B cell (primary cell): ENCODE measurements at regions of chr17 and their contacts with region 1.

Region 1: DNA sequence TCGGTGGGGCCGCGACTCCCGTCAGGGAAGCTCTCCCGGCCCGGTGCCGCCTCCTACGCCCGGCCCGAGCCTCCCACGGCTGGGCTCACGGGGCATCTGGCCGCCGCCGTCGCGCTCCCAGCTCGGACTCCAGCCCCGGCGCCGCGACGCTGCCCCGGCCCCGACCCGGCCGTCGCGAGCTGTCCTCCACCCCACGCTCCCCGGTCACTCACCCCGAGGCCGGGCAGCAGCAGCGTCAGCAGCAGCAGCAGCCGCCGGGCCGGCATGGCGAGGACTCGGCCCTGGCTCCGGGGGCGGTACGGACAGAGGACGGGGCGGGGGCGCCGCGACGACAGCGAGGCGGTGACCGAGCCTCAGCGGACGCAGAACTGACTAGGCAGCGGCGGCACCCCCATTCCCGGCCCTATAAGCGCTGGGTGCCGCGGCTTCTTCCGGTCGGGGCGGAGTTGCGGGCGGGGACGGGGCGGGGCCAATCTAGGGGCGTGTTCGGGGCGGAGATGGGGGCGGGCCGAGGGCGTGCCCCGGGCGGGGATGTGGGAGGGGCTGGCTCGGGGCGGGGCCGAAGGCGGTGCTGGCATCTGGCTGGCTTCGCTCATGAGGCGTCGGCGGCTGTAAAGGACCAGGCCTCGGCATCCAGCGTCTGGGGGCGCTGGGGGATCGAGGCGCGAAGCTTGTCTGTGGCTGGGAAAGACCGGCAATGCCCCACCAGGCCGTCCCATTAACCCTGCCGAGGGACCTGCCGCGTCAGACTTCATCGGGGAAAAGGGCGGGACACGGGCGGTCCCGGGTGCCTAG is at the start of gene ERN1:
- DNase-seq: peak; percentile 92
- ATAC-seq: peak; percentile 87
- H3K4me3 ChIP-seq: peak within 1 kb of the TSS; percentile 32 to 80 (median 66)
- H3K4me3 Mint-ChIP-seq: peak within 1 kb of the TSS; percentile 89
- H3K27ac ChIP-seq: peak within 1 kb of the TSS; percentile 72 to 76
- H3K27ac Mint-ChIP-seq: peak within 1 kb of the TSS; percentile 89
- H3K4me1 ChIP-seq: peaks cover 13 to 23% of the 10 kb centered on the region in 2 donors
- H3K4me1 Mint-ChIP-seq: peaks cover 21% of the 10 kb centered on the region
- H3K27me3 ChIP-seq: no peaks in the 10 kb centered on the region
- H3K27me3 Mint-ChIP-seq: no peaks in the 10 kb centered on the region
- CTCF ChIP-seq: no peak
- total RNA-seq, gene ERN1: 19.4 and 24.7 TPM in 2 replicates

Region 2: DNA sequence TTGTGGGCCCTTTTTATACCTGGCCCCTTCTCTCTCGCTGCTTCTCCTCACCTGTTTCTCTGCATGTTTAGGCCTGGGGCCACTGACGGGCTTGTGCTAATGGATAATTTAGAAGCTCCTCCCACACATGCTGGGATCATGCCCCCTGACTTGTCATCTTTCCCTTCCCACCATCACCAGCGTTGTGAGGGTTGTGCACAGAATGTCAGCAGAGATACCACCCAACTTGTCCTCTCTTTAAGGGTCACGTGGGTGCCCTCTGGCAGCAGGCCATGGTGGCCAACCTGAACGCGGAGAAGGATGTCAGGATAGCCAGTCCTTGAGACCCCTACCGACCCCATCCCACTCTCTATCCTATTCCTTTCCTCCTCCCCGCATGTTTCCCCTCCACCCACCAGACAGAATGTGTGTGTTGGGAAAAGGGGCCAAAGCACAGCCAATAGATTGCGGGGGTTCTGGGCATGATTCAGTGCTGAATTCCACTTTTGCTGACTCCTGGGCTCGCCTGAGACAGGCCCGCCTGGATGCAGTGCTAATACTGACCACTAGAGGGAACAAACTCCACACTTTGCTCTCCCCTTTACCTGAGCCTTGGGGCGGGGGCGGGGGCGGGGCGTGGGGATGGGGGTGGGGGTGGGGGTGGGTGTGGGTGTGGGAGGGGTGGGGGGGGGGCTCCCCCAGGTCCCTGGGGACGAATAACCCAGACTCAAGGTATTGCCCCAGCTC is 247.9 kb before region 1 on chr17 and contains the start of gene GH2:
- CTCF ChIA-PET with region 1: interaction called, 46 read pairs
- POLR2A ChIA-PET with region 1: no interaction called
- intact Hi-C with region 1: loop called (anchors 5 kb)
- DNase-seq: peak; percentile 76
- ATAC-seq: peak; percentile 91
- H3K4me3 ChIP-seq: no peak within 1 kb of the TSS
- H3K4me3 Mint-ChIP-seq: no peak within 1 kb of the TSS
- H3K27ac ChIP-seq: no peak within 1 kb of the TSS
- H3K27ac Mint-ChIP-seq: no peak within 1 kb of the TSS
- H3K4me1 ChIP-seq: no peaks in the 10 kb centered on the region
- H3K4me1 Mint-ChIP-seq: peaks cover 10% of the 10 kb centered on the region
- H3K27me3 ChIP-seq: peaks cover 0 to 3% (median 0%) of the 10 kb centered on the region in 4 experiments
- H3K27me3 Mint-ChIP-seq: peaks cover 3% of the 10 kb centered on the region
- CTCF ChIP-seq: peak; percentile 61
- total RNA-seq, gene GH2: not detected in 2 replicates

Region 3: DNA sequence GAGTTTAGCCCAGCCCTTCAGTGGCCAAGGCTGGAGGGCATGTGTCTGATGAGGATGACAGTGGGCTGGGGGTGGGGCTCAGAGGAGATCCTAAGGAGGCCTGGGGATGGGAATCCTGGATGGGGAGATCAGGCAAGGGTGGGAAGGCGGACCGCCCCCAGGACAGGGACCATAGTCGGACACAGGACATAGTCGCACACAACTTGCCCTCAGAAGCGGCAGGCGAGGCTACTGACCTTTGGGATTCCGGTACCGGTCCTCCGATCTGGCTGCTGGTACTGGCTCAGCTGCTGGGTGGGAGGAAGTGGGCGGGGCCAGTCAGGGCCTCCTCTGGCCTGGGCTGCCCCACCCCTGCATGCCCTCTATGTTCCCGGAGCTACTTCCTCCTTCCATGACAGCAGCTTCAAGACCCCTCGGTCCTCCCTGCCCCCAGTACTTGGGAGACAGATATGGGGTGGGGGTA is 198.8 kb before region 1 on chr17:
- CTCF ChIA-PET with region 1: interaction called, 16 read pairs
- POLR2A ChIA-PET with region 1: no interaction called
- intact Hi-C with region 1: no loop called
- DNase-seq: peak; percentile 77
- ATAC-seq: peak; percentile 39
- H3K4me3 ChIP-seq: peak overlapping the region; percentile 80 to 100 (median 97)
- H3K4me3 Mint-ChIP-seq: peak overlapping the region; percentile 99
- H3K27ac ChIP-seq: peak overlapping the region; percentile 83 to 85
- H3K27ac Mint-ChIP-seq: peak overlapping the region; percentile 97
- H3K4me1 ChIP-seq: peaks cover 72 to 85% of the 10 kb centered on the region in 2 donors
- H3K4me1 Mint-ChIP-seq: peaks cover 86% of the 10 kb centered on the region
- H3K27me3 ChIP-seq: no peaks in the 10 kb centered on the region
- H3K27me3 Mint-ChIP-seq: no peaks in the 10 kb centered on the region
- CTCF ChIP-seq: no peak

Region 4: GRCh38 chr17:64020056-64020766 is 109.8 kb before region 1 on chr17 and contains the start of gene ICAM2:
- CTCF ChIA-PET with region 1: interaction called, 655 read pairs
- POLR2A ChIA-PET with region 1: interaction called, 8 read pairs
- intact Hi-C with region 1: loop called (anchors 1 kb)
- DNase-seq: peak; percentile 97
- ATAC-seq: peak; percentile 83
- H3K4me3 ChIP-seq: peak within 1 kb of the TSS; percentile 70 to 87 (median 75)
- H3K4me3 Mint-ChIP-seq: peak within 1 kb of the TSS; percentile 98
- H3K27ac ChIP-seq: peak within 1 kb of the TSS; percentile 99
- H3K27ac Mint-ChIP-seq: peak within 1 kb of the TSS; percentile 99
- H3K4me1 ChIP-seq: peaks cover 59 to 66% of the 10 kb centered on the region in 2 donors
- H3K4me1 Mint-ChIP-seq: peaks cover 73% of the 10 kb centered on the region
- H3K27me3 ChIP-seq: no peaks in the 10 kb centered on the region
- H3K27me3 Mint-ChIP-seq: no peaks in the 10 kb centered on the region
- CTCF ChIP-seq: no peak
- total RNA-seq, gene ICAM2: 48.7 and 55.7 TPM in 2 replicates

Region 5: GRCh38 chr17:64073771-64074703 is 55.9 kb before region 1 on chr17:
- CTCF ChIA-PET with region 1: interaction called, 27 read pairs
- POLR2A ChIA-PET with region 1: no interaction called
- intact Hi-C with region 1: no loop called
- DNase-seq: peak; percentile 71
- ATAC-seq: peak; percentile 90
- H3K4me3 ChIP-seq: peak overlapping the region in 3 of 5 experiments; percentile 6 to 42 (median 13)
- H3K4me3 Mint-ChIP-seq: peak overlapping the region; percentile 53
- H3K27ac ChIP-seq: no peak overlapping the region
- H3K27ac Mint-ChIP-seq: peak overlapping the region; percentile 5
- H3K4me1 ChIP-seq: peaks cover 27 to 37% of the 10 kb centered on the region in 2 donors
- H3K4me1 Mint-ChIP-seq: peaks cover 33% of the 10 kb centered on the region
- H3K27me3 ChIP-seq: no peaks in the 10 kb centered on the region
- H3K27me3 Mint-ChIP-seq: no peaks in the 10 kb centered on the region
- CTCF ChIP-seq: no peak

Region 6: DNA sequence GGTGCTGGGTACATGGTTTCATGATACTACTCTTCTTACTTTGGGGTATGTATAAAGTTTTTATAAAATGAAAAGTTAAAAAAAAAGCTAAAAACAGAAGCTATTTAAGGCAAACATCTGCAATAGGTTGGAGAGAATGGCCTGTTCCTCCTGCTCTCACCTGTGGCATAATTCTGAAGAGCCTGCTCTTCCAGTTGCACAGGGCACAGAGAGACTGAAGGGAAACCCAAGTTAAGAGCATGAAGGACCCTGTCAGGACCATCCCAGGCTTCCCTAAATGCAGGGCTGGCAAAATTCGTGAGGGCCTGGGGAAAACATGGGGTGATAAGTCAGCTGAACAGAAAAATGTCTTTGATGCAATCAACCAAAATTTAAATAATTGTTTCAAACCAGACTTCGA is 42.3 kb before region 1 on chr17:
- CTCF ChIA-PET with region 1: no interaction called
- POLR2A ChIA-PET with region 1: no interaction called
- intact Hi-C with region 1: no loop called
- DNase-seq: no peak
- ATAC-seq: no peak
- H3K4me3 ChIP-seq: no peak overlapping the region
- H3K4me3 Mint-ChIP-seq: no peak overlapping the region
- H3K27ac ChIP-seq: no peak overlapping the region
- H3K27ac Mint-ChIP-seq: no peak overlapping the region
- H3K4me1 ChIP-seq: no peaks in the 10 kb centered on the region
- H3K4me1 Mint-ChIP-seq: peaks cover 9% of the 10 kb centered on the region
- H3K27me3 ChIP-seq: no peaks in the 10 kb centered on the region
- H3K27me3 Mint-ChIP-seq: no peaks in the 10 kb centered on the region
- CTCF ChIP-seq: no peak

Region 7: GRCh38 chr17:64200080-64201032 is 70.4 kb after region 1 on chr17:
- CTCF ChIA-PET with region 1: no interaction called
- POLR2A ChIA-PET with region 1: no interaction called
- intact Hi-C with region 1: no loop called
- DNase-seq: no peak
- ATAC-seq: no peak
- H3K4me3 ChIP-seq: no peak overlapping the region
- H3K4me3 Mint-ChIP-seq: no peak overlapping the region
- H3K27ac ChIP-seq: no peak overlapping the region
- H3K27ac Mint-ChIP-seq: no peak overlapping the region
- H3K4me1 ChIP-seq: no peaks in the 10 kb centered on the region
- H3K4me1 Mint-ChIP-seq: no peaks in the 10 kb centered on the region
- H3K27me3 ChIP-seq: no peaks in the 10 kb centered on the region
- H3K27me3 Mint-ChIP-seq: no peaks in the 10 kb centered on the region
- CTCF ChIP-seq: no peak

Region 8: GRCh38 chr17:64223931-64224629 is 94.1 kb after region 1 on chr17:
- CTCF ChIA-PET with region 1: no interaction called
- POLR2A ChIA-PET with region 1: no interaction called
- intact Hi-C with region 1: no loop called
- DNase-seq: no peak
- ATAC-seq: no peak
- H3K4me3 ChIP-seq: no peak overlapping the region
- H3K4me3 Mint-ChIP-seq: no peak overlapping the region
- H3K27ac ChIP-seq: no peak overlapping the region
- H3K27ac Mint-ChIP-seq: no peak overlapping the region
- H3K4me1 ChIP-seq: no peaks in the 10 kb centered on the region
- H3K4me1 Mint-ChIP-seq: peaks cover 2% of the 10 kb centered on the region
- H3K27me3 ChIP-seq: no peaks in the 10 kb centered on the region
- H3K27me3 Mint-ChIP-seq: no peaks in the 10 kb centered on the region
- CTCF ChIP-seq: no peak

Region 9: GRCh38 chr17:64281962-64282727 is 152.2 kb after region 1 on chr17:
- CTCF ChIA-PET with region 1: interaction called, 11 read pairs
- POLR2A ChIA-PET with region 1: no interaction called
- intact Hi-C with region 1: no loop called
- DNase-seq: peak; percentile 74
- ATAC-seq: peak; percentile 45
- H3K4me3 ChIP-seq: no peak overlapping the region
- H3K4me3 Mint-ChIP-seq: no peak overlapping the region
- H3K27ac ChIP-seq: no peak overlapping the region
- H3K27ac Mint-ChIP-seq: no peak overlapping the region
- H3K4me1 ChIP-seq: no peaks in the 10 kb centered on the region
- H3K4me1 Mint-ChIP-seq: no peaks in the 10 kb centered on the region
- H3K27me3 ChIP-seq: no peaks in the 10 kb centered on the region
- H3K27me3 Mint-ChIP-seq: peaks cover 3% of the 10 kb centered on the region
- CTCF ChIP-seq: peak; percentile 80

Region 10: GRCh38 chr17:64496786-64497564 is 367.0 kb after region 1 on chr17 and contains the start of gene POLG2:
- CTCF ChIA-PET with region 1: no interaction called
- POLR2A ChIA-PET with region 1: no interaction called
- intact Hi-C with region 1: no loop called
- DNase-seq: peak; percentile 95
- ATAC-seq: peak; percentile 86
- H3K4me3 ChIP-seq: peak within 1 kb of the TSS; percentile 71 to 90 (median 74)
- H3K4me3 Mint-ChIP-seq: peak within 1 kb of the TSS; percentile 99
- H3K27ac ChIP-seq: peak within 1 kb of the TSS; percentile 76 to 82
- H3K27ac Mint-ChIP-seq: peak within 1 kb of the TSS; percentile 98
- H3K4me1 ChIP-seq: peaks cover 29% of the 10 kb centered on the region in 2 donors
- H3K4me1 Mint-ChIP-seq: peaks cover 68% of the 10 kb centered on the region
- H3K27me3 ChIP-seq: no peaks in the 10 kb centered on the region
- H3K27me3 Mint-ChIP-seq: no peaks in the 10 kb centered on the region
- CTCF ChIP-seq: peak; percentile 55
- total RNA-seq, gene POLG2: 74.5 and 84.8 TPM in 2 replicates